Spleen (tissue), 13 donors: ENCODE measurements at regions of chr20 and their contacts with region 1.

Region 1: GRCh38 chr20:25696384-25697131 is at the start of gene ZNF337:
- DNase-seq: peak; percentile 98
- H3K4me3 ChIP-seq: peak within 1 kb of the TSS; percentile 70 to 93 (median 86)
- H3K27ac ChIP-seq: peak within 1 kb of the TSS; percentile 86 to 92 (median 89)
- H3K4me1 ChIP-seq: peaks cover 10 to 40% (median 21%) of the 10 kb centered on the region in 6 donors
- H3K27me3 ChIP-seq: no peaks in the 10 kb centered on the region
- CTCF ChIP-seq: peak in 3 of 11 experiments; percentile 15 to 25 (median 19)
- POLR2A ChIP-seq: peak; percentile 19 to 56 (median 42)
- total RNA-seq, gene ZNF337: 14.2 to 21.9 (median 16.5) TPM

Region 2: GRCh38 chr20:25514747-25515340 is 181.7 kb before region 1 on chr20:
- intact Hi-C with region 1: no loop called
- DNase-seq: no peak
- H3K4me3 ChIP-seq: no peak overlapping the region
- H3K27ac ChIP-seq: no peak overlapping the region
- H3K4me1 ChIP-seq: no peaks in the 10 kb centered on the region
- H3K27me3 ChIP-seq: no peaks in the 10 kb centered on the region
- CTCF ChIP-seq: no peak
- POLR2A ChIP-seq: no peak

Region 3: DNA sequence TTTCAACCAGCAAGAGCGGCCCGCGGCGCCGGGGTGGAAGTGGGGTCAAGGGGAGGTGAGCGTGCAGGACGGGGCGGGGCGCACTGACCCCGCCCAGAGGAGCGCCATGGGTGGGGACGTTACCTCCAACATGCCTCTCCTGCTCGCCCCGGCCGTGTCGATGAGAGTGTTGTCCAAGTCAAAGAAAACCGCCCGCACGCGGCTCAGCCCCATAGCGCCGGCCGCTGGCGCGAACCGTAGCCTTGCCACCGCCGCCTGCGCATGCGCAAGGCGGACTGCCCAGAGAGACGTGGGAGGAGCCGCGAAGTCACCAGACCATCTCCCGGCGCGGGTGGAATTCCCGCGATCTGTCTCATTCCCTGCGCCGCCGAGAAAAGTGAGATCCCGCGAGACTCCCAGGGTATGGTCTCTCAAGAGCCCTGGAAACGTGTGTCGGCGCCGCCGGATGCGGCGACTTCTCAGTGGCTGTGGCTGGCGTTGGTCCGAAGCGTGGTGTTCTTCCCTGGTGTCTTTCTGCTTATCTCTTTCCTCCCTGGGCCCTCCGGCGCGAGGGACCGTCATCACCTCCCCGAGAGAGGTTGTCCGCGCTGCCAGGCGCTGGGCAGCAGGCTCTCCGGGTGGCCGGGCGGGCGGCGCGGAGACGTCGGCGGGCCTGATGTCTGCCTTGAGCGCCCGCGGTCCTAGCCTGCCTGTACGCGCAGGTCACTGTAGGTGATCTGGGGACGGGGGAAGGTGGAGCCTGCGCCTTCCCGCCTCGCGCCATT is 72.6 kb before region 1 on chr20 and contains the start of gene NANP:
- intact Hi-C with region 1: loop called (anchors 5 kb)
- DNase-seq: peak; percentile 97
- H3K4me3 ChIP-seq: peak within 1 kb of the TSS; percentile 83 to 99 (median 93)
- H3K27ac ChIP-seq: peak within 1 kb of the TSS; percentile 71 to 93 (median 90)
- H3K4me1 ChIP-seq: peaks cover 9 to 38% (median 21%) of the 10 kb centered on the region in 6 donors
- H3K27me3 ChIP-seq: no peaks in the 10 kb centered on the region
- CTCF ChIP-seq: peak in 2 of 11 experiments; percentile 22 to 34
- POLR2A ChIP-seq: peak in 1 of 3 donors; percentile 29
- total RNA-seq, gene NANP: 2.9 to 6.1 (median 3.4) TPM